ENCODE measurements at regions of chr2 and their contacts with region 1.

Region 1: GRCh38 chr2:190880378-190881073 is at the start of gene GLS:
- DNase-seq: peak; percentile 95
- H3K4me3 Mint-ChIP-seq: peak within 1 kb of the TSS; percentile 91
- H3K27ac Mint-ChIP-seq: peak within 1 kb of the TSS; percentile 97
- H3K4me1 Mint-ChIP-seq: peaks cover 35% of the 10 kb centered on the region
- H3K27me3 Mint-ChIP-seq: no peaks in the 10 kb centered on the region
- total RNA-seq, gene GLS: 195 and 201 TPM in 2 replicates

Region 2: GRCh38 chr2:190648289-190649034 is 232.1 kb before region 1 on chr2:
- intact Hi-C with region 1: loop called (anchors 5 kb)
- DNase-seq: peak; percentile 74
- H3K4me3 Mint-ChIP-seq: peak overlapping the region; percentile 73
- H3K27ac Mint-ChIP-seq: peak overlapping the region; percentile 74
- H3K4me1 Mint-ChIP-seq: peaks cover 40% of the 10 kb centered on the region
- H3K27me3 Mint-ChIP-seq: no peaks in the 10 kb centered on the region

Region 3: GRCh38 chr2:190843874-190844699 is 36.4 kb before region 1 on chr2:
- intact Hi-C with region 1: loop called (anchors 1 kb)
- DNase-seq: peak; percentile 17
- H3K4me3 Mint-ChIP-seq: no peak overlapping the region
- H3K27ac Mint-ChIP-seq: peak overlapping the region; percentile 94
- H3K4me1 Mint-ChIP-seq: peaks cover 44% of the 10 kb centered on the region
- H3K27me3 Mint-ChIP-seq: no peaks in the 10 kb centered on the region

Region 4: GRCh38 chr2:191013932-191014652 is 133.6 kb after region 1 on chr2 and contains the start of gene STAT1:
- intact Hi-C with region 1: loop called (anchors 2 kb)
- DNase-seq: peak; percentile 96
- H3K4me3 Mint-ChIP-seq: no peak within 1 kb of the TSS
- H3K27ac Mint-ChIP-seq: no peak within 1 kb of the TSS
- H3K4me1 Mint-ChIP-seq: peaks cover 40% of the 10 kb centered on the region
- H3K27me3 Mint-ChIP-seq: no peaks in the 10 kb centered on the region
- total RNA-seq, gene STAT1: 135 and 139 TPM in 2 replicates

Region 5: GRCh38 chr2:191150600-191151330 is 270.2 kb after region 1 on chr2 and contains the start of gene STAT4:
- intact Hi-C with region 1: loop called (anchors 5 kb)
- DNase-seq: peak; percentile 76
- H3K4me3 Mint-ChIP-seq: peak within 1 kb of the TSS; percentile 95
- H3K27ac Mint-ChIP-seq: peak within 1 kb of the TSS; percentile 96
- H3K4me1 Mint-ChIP-seq: peaks cover 71% of the 10 kb centered on the region
- H3K27me3 Mint-ChIP-seq: no peaks in the 10 kb centered on the region
- total RNA-seq, gene STAT4: 92.2 and 96.9 TPM in 2 replicates

Measured in activated T-helper 2 cell treated with anti-CD3 and anti-CD28 coated beads, Interferon-gamma antibody, Interleukin-2, Interleukin-4, amounts not matched to agents 10 μg/mL and 5 μg/mL and 100 μg/mL, durations not matched to agents 14 hours and 24 hours and 36 hours (primary cell).